Activated CD4-positive, alpha-beta memory T cell treated with anti-CD3 and anti-CD28 coated beads for 36 hours (primary cell): ENCODE measurements at regions of chr3 and their contacts with region 1.

Region 1: GRCh38 chr3:59575113-59576001 is 525.5 kb upstream of the CFAP20DC start:
- DNase-seq: peak; percentile 90
- H3K4me3 Mint-ChIP-seq: no peak overlapping the region
- H3K27ac Mint-ChIP-seq: no peak overlapping the region
- H3K4me1 Mint-ChIP-seq: peaks cover 4% of the 10 kb centered on the region
- H3K27me3 Mint-ChIP-seq: no peaks in the 10 kb centered on the region

Region 2: DNA sequence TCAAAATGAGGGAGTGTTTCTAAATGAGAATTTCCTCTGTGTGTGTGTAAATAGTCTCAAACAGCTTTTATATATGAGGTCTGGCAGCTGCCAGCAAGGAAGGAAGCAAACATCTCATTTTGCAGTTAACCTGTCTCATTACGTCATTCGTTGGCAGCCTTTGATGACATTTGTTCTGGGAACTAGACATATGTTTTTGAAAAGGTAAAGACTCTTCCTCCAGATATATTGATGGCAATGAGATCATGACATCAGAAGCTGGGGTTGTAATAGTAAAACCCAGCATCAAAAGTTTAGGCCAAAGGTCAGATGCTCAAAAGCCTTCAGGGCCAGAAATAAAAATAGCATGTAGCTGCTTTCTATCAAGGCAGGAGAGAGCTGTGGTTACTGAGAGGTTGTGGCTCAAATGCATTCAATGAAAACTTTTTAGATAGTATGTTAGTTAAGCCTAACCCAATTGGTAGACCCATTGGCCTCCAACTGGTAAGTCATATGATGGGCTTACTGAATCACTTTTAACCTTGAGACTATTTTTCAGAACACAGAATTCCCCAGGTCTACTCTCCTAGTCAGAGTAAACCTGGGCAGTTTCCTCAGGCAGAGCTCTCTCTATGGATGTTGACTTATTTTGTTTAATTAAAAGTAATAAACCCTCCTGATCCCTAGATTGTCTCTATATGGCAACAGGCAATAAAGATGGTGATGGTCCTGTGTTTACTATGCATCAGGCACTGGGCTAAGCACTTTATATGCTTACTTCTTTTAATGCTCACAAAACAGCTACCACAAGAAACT is 139.0 kb before region 1 on chr3:
- CTCF ChIA-PET with region 1: no interaction called
- POLR2A ChIA-PET with region 1: no interaction called
- intact Hi-C with region 1: no loop called
- DNase-seq: no peak
- H3K4me3 Mint-ChIP-seq: no peak overlapping the region
- H3K27ac Mint-ChIP-seq: no peak overlapping the region
- H3K4me1 Mint-ChIP-seq: no peaks in the 10 kb centered on the region
- H3K27me3 Mint-ChIP-seq: no peaks in the 10 kb centered on the region

Region 3: GRCh38 chr3:59809710-59810444 is 234.5 kb after region 1 on chr3:
- CTCF ChIA-PET with region 1: interaction called, 48 read pairs
- POLR2A ChIA-PET with region 1: no interaction called
- intact Hi-C with region 1: loop called (anchors 2 kb)
- DNase-seq: no peak
- H3K4me3 Mint-ChIP-seq: no peak overlapping the region
- H3K27ac Mint-ChIP-seq: no peak overlapping the region
- H3K4me1 Mint-ChIP-seq: no peaks in the 10 kb centered on the region
- H3K27me3 Mint-ChIP-seq: no peaks in the 10 kb centered on the region

Region 4: GRCh38 chr3:59857589-59858346 is 282.4 kb after region 1 on chr3:
- CTCF ChIA-PET with region 1: interaction called, 49 read pairs
- POLR2A ChIA-PET with region 1: no interaction called
- intact Hi-C with region 1: loop called (anchors 1 kb)
- DNase-seq: peak; percentile 84
- H3K4me3 Mint-ChIP-seq: no peak overlapping the region
- H3K27ac Mint-ChIP-seq: no peak overlapping the region
- H3K4me1 Mint-ChIP-seq: peaks cover 11% of the 10 kb centered on the region
- H3K27me3 Mint-ChIP-seq: no peaks in the 10 kb centered on the region